H1 (cell line): ENCODE measurements at regions of chr5 and their contacts with region 1.

Region 1: GRCh38 chr5:138610918-138611677 is 35.9 kb upstream of the HSPA9 start:
- DNase-seq: peak in 1 of 2 experiments; percentile 72
- H3K4me3 ChIP-seq: peak overlapping the region; percentile 33 to 69 (median 64)
- H3K27ac ChIP-seq: peak overlapping the region; percentile 56
- H3K4me1 ChIP-seq: peaks cover 3 to 21% (median 16%) of the 10 kb centered on the region in 4 experiments
- H3K27me3 ChIP-seq: no peaks in the 10 kb centered on the region
- CTCF ChIP-seq: peak; percentile 36 to 52 (median 41)
- EP300 ChIP-seq: peak in 1 of 2 experiments; percentile 27; a peak in 1 of 3 replicates
- POLR2A ChIP-seq: no peak
- RAD21 ChIP-seq: peak; percentile 35 to 53; a peak in 3 of 4 replicates

Region 2: DNA sequence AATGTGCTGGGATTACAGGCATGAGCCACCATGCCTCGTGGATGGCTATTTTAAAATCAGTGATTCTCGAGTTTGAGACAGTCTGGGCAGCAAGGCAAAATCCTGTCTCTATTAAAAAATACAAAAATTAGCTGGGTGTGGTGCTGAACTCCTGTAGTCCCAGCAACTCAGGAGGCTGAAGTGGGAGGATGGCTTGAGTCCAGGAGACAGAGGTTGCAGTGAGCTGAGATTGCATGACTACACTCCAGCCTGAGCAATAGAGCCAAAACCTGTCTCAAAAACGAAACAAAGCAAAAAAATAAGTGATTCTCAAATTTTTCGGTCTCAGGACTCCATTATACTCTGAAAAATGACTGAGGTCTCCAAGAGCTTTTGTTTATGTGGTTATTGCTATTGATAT is 12.0 kb after region 1 on chr5:
- CTCF ChIA-PET with region 1: interaction called, 7 read pairs
- POLR2A ChIA-PET with region 1: interaction called, 14 read pairs
- DNase-seq: no peak
- H3K4me3 ChIP-seq: no peak overlapping the region
- H3K27ac ChIP-seq: no peak overlapping the region
- H3K4me1 ChIP-seq: peaks cover 0 to 6% (median 1%) of the 10 kb centered on the region in 4 experiments; a peak in 2 of 7 replicates
- H3K27me3 ChIP-seq: no peaks in the 10 kb centered on the region
- CTCF ChIP-seq: no peak
- EP300 ChIP-seq: no peak
- POLR2A ChIP-seq: no peak
- RAD21 ChIP-seq: no peak

Region 3: GRCh38 chr5:138649316-138649720 is 38.2 kb after region 1 on chr5:
- CTCF ChIA-PET with region 1: interaction called, 18 read pairs
- POLR2A ChIA-PET with region 1: no interaction called
- DNase-seq: no peak
- H3K4me3 ChIP-seq: peak overlapping the region in 1 of 4 experiments; percentile 0; a peak in 1 of 8 replicates
- H3K27ac ChIP-seq: no peak overlapping the region
- H3K4me1 ChIP-seq: peaks cover 4 to 22% (median 11%) of the 10 kb centered on the region in 4 experiments
- H3K27me3 ChIP-seq: no peaks in the 10 kb centered on the region
- CTCF ChIP-seq: no peak
- EP300 ChIP-seq: no peak
- POLR2A ChIP-seq: no peak
- RAD21 ChIP-seq: no peak

Region 4: DNA sequence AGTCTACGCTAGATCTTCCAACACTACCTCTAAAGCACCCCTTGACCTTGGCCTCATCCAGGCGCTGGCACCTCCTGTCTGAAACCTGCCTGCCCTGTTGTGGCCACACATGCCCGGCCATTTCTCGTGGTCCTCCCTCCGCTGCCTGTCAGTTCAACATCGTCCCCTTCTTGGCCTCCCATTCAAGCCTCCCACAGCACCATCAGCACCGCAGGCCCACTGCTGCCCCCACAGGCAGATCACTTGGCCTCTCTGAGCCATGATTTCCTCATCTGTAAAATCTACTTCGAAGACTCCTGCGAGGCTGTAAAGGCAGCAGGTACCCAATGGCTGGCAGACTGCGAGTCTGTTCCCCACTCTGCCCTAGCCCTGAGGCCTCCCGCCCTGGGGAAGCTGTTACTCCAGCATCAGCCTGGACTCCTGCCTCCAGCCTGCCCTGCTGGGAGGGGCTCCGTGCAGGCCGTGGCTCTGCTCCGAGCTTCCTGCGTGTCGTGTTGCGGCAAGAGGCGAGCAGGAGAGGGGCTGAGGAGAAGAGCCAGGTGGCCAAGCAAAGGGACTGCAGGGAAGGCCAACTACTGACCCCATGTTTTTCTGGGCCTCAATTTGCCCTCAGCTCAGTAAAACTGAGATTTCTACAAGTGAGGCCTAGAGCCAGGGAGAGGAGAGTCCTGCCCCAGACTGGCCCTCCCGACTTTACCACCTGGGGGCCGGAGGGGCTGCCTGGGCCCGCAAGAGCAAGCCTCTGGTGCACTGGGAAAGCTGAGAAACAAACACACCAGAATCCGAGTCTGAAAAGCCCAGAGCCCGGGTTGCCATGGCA is 334.5 kb after region 1 on chr5:
- CTCF ChIA-PET with region 1: no interaction called
- POLR2A ChIA-PET with region 1: no interaction called
- DNase-seq: no peak
- H3K4me3 ChIP-seq: no peak overlapping the region
- H3K27ac ChIP-seq: no peak overlapping the region
- H3K4me1 ChIP-seq: peaks cover 0 to 24% (median 11%) of the 10 kb centered on the region in 4 experiments; a peak in 6 of 7 replicates
- H3K27me3 ChIP-seq: no peaks in the 10 kb centered on the region
- CTCF ChIP-seq: peak in 1 of 3 experiments; percentile 30; a peak in 1 of 4 replicates
- EP300 ChIP-seq: no peak
- POLR2A ChIP-seq: no peak
- RAD21 ChIP-seq: peak; percentile 20; a peak in 2 of 4 replicates